ENCODE measurements at regions of chr2 and their contacts with region 1.

Region 1: GRCh38 chr2:207503234-207503633 is 26.5 kb upstream of the CREB1 start:
- DNase-seq: no peak
- ATAC-seq: peak; percentile 71
- H3K4me3 Mint-ChIP-seq: peak overlapping the region; percentile 42
- H3K27ac Mint-ChIP-seq: peak overlapping the region; percentile 85
- H3K4me1 Mint-ChIP-seq: peaks cover 83% of the 10 kb centered on the region
- H3K27me3 Mint-ChIP-seq: no peaks in the 10 kb centered on the region
- CTCF ChIP-seq: no peak

Region 2: GRCh38 chr2:207484444-207485391 is 18.5 kb before region 1 on chr2:
- CTCF ChIA-PET with region 1: no interaction called
- POLR2A ChIA-PET with region 1: interaction called, 4 read pairs
- intact Hi-C with region 1: loop called (anchors 2 kb)
- DNase-seq: no peak
- ATAC-seq: peak; percentile 93
- H3K4me3 Mint-ChIP-seq: peak overlapping the region; percentile 20
- H3K27ac Mint-ChIP-seq: peak overlapping the region; percentile 68
- H3K4me1 Mint-ChIP-seq: peaks cover 31% of the 10 kb centered on the region
- H3K27me3 Mint-ChIP-seq: no peaks in the 10 kb centered on the region
- CTCF ChIP-seq: no peak

Region 3: GRCh38 chr2:207513551-207514257 is 10.5 kb after region 1 on chr2:
- CTCF ChIA-PET with region 1: no interaction called
- POLR2A ChIA-PET with region 1: no interaction called
- intact Hi-C with region 1: loop called (anchors 1 kb)
- DNase-seq: no peak
- ATAC-seq: no peak
- H3K4me3 Mint-ChIP-seq: no peak overlapping the region
- H3K27ac Mint-ChIP-seq: no peak overlapping the region
- H3K4me1 Mint-ChIP-seq: no peaks in the 10 kb centered on the region
- H3K27me3 Mint-ChIP-seq: no peaks in the 10 kb centered on the region
- CTCF ChIP-seq: no peak

Region 4: GRCh38 chr2:207914716-207915115 is 411.5 kb after region 1 on chr2:
- CTCF ChIA-PET with region 1: no interaction called
- POLR2A ChIA-PET with region 1: no interaction called
- intact Hi-C with region 1: no loop called
- DNase-seq: no peak
- ATAC-seq: no peak
- H3K4me3 Mint-ChIP-seq: no peak overlapping the region
- H3K27ac Mint-ChIP-seq: no peak overlapping the region
- H3K4me1 Mint-ChIP-seq: no peaks in the 10 kb centered on the region
- H3K27me3 Mint-ChIP-seq: no peaks in the 10 kb centered on the region
- CTCF ChIP-seq: no peak